Transverse colon (tissue), 4 donors: ENCODE measurements at regions of chr4 and their contacts with region 1.

Region 1: DNA sequence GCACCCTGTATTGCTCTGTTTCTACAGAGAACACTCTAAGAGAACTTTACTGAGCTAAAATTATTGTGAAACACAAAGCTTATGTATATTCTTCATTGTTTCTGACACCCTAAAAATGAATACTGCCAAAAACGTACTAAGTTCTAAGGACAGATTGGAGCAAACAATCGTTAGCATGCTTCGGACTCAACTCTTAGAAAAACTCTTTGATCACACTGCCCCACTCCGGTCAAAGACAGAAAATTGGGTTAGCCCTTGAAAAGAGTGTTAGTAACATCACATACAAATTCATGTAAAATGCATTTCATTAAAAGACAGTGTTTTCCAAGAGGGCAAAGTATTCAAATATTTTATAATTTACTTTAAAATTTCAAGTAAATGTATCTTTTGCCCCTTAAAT is 177.4 kb downstream of the DCHS2 start:
- DNase-seq: no peak
- H3K4me3 ChIP-seq: no peak overlapping the region
- H3K27ac ChIP-seq: no peak overlapping the region
- H3K4me1 ChIP-seq: no peaks in the 10 kb centered on the region
- H3K27me3 ChIP-seq: no peaks in the 10 kb centered on the region
- CTCF ChIP-seq: no peak
- EP300 ChIP-seq: no peak
- POLR2A ChIP-seq: no peak

Region 2: GRCh38 chr4:153785910-153786721 is 528.1 kb before region 1 on chr4:
- in situ Hi-C with region 1: loop called in 1 of 4 experiments (anchors 25 kb)
- intact Hi-C with region 1: no loop called
- DNase-seq: no peak
- H3K4me3 ChIP-seq: no peak overlapping the region
- H3K27ac ChIP-seq: no peak overlapping the region
- H3K4me1 ChIP-seq: peaks cover 9 to 23% (median 17%) of the 10 kb centered on the region in 4 donors
- H3K27me3 ChIP-seq: peaks cover 99% of the 10 kb centered on the region
- CTCF ChIP-seq: peak in 4 of 5 experiments; percentile 21 to 35 (median 26)
- EP300 ChIP-seq: no peak
- POLR2A ChIP-seq: no peak